Posterior cingulate gyrus (tissue), 11 donors: ENCODE measurements at regions of chr10 and their contacts with region 1.

Region 1: GRCh38 chr10:73810735-73811465 is 498 bp downstream of the NDST2 start:
- DNase-seq: peak in 5 of 10 donors; percentile 29 to 88 (median 81)

Region 2: DNA sequence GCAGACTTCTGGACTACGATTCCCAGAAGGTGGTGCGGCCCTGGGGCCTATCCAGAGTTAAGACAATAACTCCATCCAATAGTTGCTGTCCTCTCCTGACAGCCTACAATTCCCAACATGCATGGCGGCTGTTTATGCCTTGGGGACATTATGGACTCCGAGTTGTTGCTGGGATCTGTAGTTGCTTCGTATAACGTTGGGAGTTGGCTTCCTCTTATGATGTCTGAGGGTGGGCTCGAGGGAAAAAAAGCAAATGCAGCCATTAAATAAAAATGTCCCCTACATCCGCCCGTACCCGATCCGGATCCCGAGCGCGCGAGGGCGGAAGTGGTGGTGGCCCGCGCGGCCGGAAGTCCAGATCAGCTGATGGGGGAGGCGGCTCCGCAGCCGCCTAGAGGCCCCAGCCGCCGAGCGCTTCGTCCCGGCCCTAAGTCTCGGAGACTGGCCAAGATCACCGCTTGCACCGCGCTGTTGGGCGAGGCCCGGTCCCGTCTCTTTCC is 25.6 kb before region 1 on chr10 and contains the start of gene ZSWIM8:
- intact Hi-C with region 1: loop called (anchors 1 kb)
- DNase-seq: peak; percentile 83 to 97 (median 90)